CD8-positive, alpha-beta memory T cell (primary cell): ENCODE measurements at regions of chr9 and their contacts with region 1.

Region 1: GRCh38 chr9:37592108-37592951 is at the start of gene TOMM5:
- DNase-seq: peak; percentile 86 to 94 (median 88)
- H3K4me3 ChIP-seq: peak within 1 kb of the TSS; percentile 99
- H3K4me3 Mint-ChIP-seq: peak within 1 kb of the TSS; percentile 94 to 100 (median 97)
- H3K27ac ChIP-seq: peak within 1 kb of the TSS; percentile 91
- H3K27ac Mint-ChIP-seq: peak within 1 kb of the TSS; percentile 93 to 99 (median 98)
- H3K4me1 ChIP-seq: peaks cover 28% of the 10 kb centered on the region
- H3K4me1 Mint-ChIP-seq: peaks cover 36 to 59% (median 51%) of the 10 kb centered on the region in 3 donors
- H3K27me3 ChIP-seq: no peaks in the 10 kb centered on the region
- H3K27me3 Mint-ChIP-seq: peaks cover 7 to 21% of the 10 kb centered on the region in 2 donors
- total RNA-seq, gene TOMM5: 222 to 227 TPM

Region 2: DNA sequence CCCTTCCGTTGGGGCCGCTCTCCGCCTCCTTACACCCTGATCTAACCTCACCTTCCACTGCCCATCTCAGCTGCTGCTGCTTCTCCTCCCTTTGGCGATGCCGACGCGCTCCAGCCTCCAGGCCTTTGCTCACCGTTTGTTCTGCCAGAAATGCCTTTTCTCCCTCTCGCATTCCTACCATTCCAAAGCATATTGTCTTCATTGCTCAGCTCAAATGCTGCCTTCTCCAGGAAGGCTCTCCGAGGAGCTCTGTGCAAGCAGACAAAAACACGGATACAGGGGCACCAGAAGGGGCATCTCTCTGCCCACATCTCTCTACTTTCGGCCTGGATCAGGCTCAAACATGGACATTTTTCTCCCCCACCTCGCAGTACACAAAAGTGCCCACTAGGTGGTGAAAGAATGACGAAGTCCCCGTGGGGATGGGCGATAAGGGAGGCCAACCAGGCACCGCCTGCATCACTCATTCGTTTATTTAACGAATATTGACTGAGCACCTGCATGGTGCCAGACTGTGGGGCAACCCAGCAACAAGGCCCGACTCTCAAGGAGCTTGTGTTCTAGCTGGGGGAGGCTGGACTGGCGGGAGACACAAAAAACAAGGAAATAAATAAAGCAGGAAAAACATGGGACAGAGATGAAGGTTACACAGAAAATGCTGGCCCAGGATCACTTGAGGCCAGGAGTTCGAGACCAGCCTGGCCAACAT is 177.2 kb before region 1 on chr9:
- CTCF ChIA-PET with region 1: interaction called, 10 read pairs
- POLR2A ChIA-PET with region 1: no interaction called
- DNase-seq: peak; percentile 57 to 79 (median 61)
- H3K4me3 ChIP-seq: no peak overlapping the region
- H3K4me3 Mint-ChIP-seq: peak overlapping the region in 5 of 7 donors; percentile 26 to 84 (median 53)
- H3K27ac ChIP-seq: no peak overlapping the region
- H3K27ac Mint-ChIP-seq: peak overlapping the region in 6 of 8 donors; percentile 11 to 87 (median 70)
- H3K4me1 ChIP-seq: peaks cover 4% of the 10 kb centered on the region
- H3K4me1 Mint-ChIP-seq: peaks cover 7 to 13% (median 9%) of the 10 kb centered on the region in 3 donors
- H3K27me3 ChIP-seq: no peaks in the 10 kb centered on the region
- H3K27me3 Mint-ChIP-seq: peaks cover 7 to 9% of the 10 kb centered on the region in 2 donors

Region 3: GRCh38 chr9:37575921-37576721 is 16.2 kb before region 1 on chr9 and contains the start of gene FBXO10:
- CTCF ChIA-PET with region 1: interaction called, 6 read pairs
- POLR2A ChIA-PET with region 1: interaction called, 12 read pairs
- DNase-seq: peak; percentile 6 to 52 (median 38)
- H3K4me3 ChIP-seq: peak within 1 kb of the TSS; percentile 55
- H3K4me3 Mint-ChIP-seq: peak within 1 kb of the TSS; percentile 86 to 93 (median 90)
- H3K27ac ChIP-seq: no peak within 1 kb of the TSS
- H3K27ac Mint-ChIP-seq: peak within 1 kb of the TSS in 7 of 8 donors; percentile 21 to 87 (median 79)
- H3K4me1 ChIP-seq: peaks cover 5% of the 10 kb centered on the region
- H3K4me1 Mint-ChIP-seq: peaks cover 12 to 28% (median 20%) of the 10 kb centered on the region in 3 donors
- H3K27me3 ChIP-seq: no peaks in the 10 kb centered on the region
- H3K27me3 Mint-ChIP-seq: no peaks in the 10 kb centered on the region
- total RNA-seq, gene FBXO10: 2.3 to 2.8 TPM

Region 4: GRCh38 chr9:37617832-37618231 is 25.5 kb after region 1 on chr9:
- CTCF ChIA-PET with region 1: no interaction called
- POLR2A ChIA-PET with region 1: no interaction called
- DNase-seq: no peak
- H3K4me3 ChIP-seq: no peak overlapping the region
- H3K4me3 Mint-ChIP-seq: no peak overlapping the region
- H3K27ac ChIP-seq: no peak overlapping the region
- H3K27ac Mint-ChIP-seq: no peak overlapping the region
- H3K4me1 ChIP-seq: no peaks in the 10 kb centered on the region
- H3K4me1 Mint-ChIP-seq: no peaks in the 10 kb centered on the region
- H3K27me3 ChIP-seq: no peaks in the 10 kb centered on the region
- H3K27me3 Mint-ChIP-seq: peaks cover 8 to 19% of the 10 kb centered on the region in 2 donors